Cardiac septum (tissue), 1 donor: ENCODE measurements at regions of chr17 and their contacts with region 1.

Region 1: DNA sequence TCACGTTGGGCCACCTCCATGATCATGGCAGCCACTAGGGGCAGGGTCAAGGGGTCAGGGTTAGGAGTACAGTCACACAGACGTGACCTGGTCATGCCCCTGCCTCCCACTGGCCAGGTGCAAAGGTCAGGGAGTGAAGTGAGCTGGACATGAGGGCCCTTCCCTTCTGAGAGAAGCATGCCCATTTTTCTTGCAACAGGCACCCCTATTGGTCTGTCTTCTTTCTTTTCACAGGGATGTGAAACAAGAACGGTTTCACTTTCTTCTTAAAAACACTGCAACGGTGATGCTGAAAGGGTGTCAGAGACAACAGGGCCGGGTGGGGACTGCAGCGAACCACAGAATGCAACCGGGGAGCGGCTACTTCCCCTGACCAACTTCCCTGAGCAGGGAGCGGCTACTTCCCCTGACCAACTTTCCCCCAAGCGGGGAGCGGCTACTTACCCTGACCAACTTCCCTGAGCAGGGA is 52.1 kb upstream of the DOC2B start:
- DNase-seq: peak; percentile 76

Region 2: DNA sequence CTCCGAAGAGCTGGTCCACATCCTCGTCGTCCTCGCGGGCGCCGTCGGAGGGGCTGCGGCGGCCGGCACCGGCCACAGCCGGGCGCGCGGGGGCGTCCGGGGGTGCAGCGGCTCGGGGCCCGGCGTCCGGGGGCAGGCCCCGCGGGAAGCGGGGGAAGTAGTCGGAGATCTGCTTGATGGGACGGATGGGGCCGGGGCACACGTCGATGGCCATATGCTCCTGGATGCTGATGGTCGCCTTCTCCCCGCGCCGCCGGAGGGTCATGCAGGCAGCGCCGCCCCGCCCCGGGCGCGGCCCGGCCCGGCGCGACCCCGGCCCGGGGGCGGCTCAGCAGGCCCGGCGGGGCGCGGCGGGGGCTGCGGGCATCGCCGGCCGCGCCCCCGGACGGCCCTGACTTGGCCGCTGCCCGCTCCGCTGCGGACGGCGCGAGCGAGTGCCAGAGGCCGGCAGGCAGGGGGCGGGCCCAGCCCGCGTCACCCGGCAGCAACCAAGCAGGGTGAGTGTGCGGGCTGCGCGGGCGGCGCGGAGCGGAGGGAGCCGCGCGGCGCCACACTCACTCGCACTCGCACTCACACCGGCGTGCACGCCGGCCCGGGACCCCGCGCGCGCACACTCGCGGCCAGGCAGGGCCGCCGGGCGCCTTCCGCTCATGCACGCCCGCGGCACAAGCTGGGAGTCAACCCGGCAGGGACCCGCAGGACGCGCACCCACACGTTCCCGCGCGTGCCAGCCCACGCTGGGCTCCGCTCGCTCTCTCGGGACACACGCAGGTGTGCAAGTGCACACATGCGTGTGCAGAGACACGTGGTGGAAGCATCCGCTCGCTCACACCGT is 52.1 kb before region 1 on chr17 and contains the start of gene DOC2B:
- intact Hi-C with region 1: loop called (anchors 5 kb)
- DNase-seq: peak; percentile 81
- total RNA-seq, gene DOC2B: 6.4 TPM

Region 3: DNA sequence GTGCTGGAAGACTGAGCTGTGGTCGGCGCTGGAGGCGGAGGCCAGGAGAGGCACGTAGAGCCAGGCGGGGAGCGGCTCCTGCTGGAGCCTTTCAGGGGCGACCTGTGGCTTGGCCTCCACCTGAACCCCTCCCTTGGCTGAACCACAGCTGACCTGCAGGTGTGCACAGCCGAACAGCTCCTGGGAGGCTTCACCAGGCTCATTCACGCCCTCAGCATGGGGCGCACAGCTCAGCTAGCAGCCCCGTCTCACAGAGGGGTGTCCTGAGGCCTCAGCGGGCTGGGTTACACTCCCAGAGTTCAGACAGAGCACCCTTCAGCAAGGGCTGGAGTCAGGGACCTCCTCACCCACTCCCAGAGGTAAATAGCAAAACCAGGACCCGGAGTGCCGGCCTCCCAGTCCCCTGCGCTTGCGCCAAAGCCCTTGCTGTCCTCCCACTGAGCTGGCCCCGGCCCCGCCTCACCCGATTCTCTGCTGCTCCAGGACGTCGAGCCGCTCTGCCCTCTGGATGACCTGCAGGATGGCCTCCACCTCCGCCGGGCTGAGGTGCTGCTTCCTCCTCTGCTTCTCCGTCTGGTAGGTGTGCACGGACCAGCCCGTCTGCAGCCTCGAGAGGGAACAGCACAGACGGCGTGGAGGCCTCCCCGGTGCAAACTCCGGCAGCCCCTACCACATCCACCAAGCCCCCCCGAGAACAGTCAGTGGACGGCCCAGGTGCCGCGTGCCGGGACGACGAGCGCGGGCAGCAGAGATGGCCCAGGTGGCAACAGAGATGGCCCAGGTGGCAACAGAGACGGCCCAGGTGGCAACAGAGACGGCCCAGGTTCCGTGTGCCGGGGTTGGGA is 87.5 kb after region 1 on chr17:
- intact Hi-C with region 1: no loop called
- DNase-seq: peak; percentile 70